ENCODE measurements at regions of chr10 and their contacts with region 1.

Region 1: GRCh38 chr10:29508554-29509244 is 126.1 kb downstream of the SVIL start:
- DNase-seq: no peak
- CTCF ChIP-seq: no peak

Region 2: DNA sequence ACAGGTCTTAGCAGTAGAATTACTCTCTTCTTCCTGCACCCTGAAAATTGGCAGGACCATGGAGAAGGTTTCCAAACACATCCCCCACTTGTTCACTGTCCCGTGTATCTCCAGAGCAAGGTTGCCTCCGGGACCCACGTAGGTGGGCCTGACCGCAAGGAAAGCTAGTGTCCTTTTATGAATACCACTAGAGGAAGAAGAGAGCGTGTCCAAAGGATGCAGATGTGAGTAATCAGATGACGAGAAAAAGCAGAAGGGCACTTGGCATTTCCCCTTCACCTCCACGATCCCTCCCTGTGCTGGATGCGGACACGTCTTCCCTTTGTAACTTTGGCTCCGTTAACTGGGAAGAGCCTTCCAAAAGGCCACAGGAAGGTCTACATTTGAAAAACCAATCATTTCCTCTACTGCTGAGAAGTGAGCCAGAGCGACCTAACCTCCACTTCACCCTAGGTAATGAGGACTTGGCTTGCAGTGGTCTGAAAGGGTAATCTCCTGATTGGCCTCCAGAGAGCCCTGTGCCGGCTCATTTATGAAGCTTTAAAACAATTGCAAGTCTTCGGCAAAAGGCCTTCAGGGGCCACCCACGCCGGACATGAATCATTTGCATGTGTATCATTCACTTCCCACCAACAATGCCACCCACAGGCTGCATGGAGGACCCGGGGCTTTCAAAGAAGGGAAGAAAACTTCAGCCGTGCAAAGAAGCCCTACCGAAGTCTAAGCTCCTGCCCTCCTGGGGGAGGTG is 164.5 kb before region 1 on chr10:
- CTCF ChIA-PET with region 1: no interaction called
- POLR2A ChIA-PET with region 1: no interaction called
- DNase-seq: no peak
- CTCF ChIP-seq: no peak

Region 3: DNA sequence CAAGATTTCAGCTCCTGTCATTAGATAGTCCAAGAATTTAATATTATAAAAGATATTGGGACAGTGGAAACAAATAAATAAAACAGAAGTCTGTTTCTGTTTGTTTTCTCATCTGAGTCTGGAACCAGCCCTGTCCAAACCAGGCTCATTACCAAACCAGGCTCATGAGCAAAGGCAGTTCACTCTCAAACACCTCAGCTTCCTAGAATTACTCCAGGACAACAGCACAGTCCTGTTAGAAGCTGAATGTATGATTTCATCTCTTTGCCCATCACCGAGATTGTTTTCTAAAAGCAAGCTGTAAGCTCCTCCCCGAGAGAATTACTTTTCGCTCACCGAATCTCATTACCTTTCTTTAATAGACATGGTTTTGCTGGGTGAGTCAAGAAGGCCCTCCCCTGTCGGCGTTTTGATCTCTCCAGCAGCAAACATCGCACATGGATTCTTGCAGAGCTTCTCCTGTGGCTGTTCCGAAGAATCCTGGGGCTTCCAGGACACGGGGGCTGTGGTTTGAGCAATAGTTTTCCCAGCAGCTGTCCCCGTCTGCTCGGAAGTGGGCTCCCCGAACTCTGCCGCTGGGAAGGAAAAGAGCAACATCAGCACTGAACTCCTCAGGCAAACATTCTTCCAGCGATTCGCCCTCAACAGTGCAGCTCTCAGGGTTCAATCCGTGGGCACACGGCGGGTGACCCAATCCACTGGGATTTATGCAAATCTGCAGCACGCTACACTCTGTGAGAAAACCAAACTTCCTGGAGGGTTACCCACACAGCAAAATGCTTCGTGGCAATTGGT is 13.6 kb after region 1 on chr10:
- CTCF ChIA-PET with region 1: interaction called, 16 read pairs
- POLR2A ChIA-PET with region 1: no interaction called
- DNase-seq: no peak
- CTCF ChIP-seq: no peak